Tibial artery (tissue), 4 donors: ENCODE measurements at regions of chr6 and their contacts with region 1.

Region 1: DNA sequence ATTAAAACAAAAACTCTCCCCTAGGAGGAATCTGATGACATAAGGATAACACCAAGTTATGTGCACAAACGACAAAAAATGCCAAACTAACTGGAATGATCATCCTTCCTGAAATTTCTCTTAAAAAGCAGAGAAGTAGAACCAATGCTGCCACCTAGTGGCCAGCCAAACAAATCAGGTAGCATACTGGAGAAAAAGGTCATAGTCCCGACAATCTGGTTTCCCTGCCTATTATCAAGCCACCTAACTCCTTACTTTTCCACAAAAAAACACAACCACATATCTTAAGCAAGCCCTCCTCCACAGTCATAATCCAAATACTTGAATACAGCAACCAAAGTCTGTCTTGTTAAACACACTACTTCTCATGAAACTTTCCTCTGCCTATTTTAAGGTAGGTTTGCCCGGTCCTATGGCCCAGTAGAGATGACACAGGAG is 5.3 kb downstream of the OARD1 start:
- DNase-seq: peak in 1 of 2 donors; percentile 79
- H3K4me3 ChIP-seq: no peak overlapping the region
- H3K27ac ChIP-seq: no peak overlapping the region
- H3K4me1 ChIP-seq: peaks cover 0 to 10% (median 8%) of the 10 kb centered on the region in 4 donors
- H3K27me3 ChIP-seq: no peaks in the 10 kb centered on the region
- CTCF ChIP-seq: peak; percentile 69

Region 2: DNA sequence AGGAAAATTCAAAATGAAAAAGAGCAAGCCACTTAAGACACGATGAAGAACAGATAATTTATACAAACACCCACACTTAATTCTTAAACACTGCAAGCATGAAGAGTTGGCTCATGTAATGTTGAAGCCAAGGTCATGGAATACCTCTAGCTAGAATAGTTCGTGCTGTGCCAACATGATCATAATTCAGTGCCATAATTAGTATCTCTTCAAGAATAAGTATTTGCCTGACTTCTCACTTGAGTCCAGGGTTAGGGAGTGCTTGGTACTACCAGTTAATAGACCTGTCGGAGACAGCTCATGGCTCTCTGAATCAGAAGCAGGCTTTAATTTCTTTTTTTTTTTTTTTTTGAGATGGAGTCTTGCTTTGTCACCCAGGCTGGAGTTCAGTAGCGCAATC is 234.2 kb before region 1 on chr6:
- intact Hi-C with region 1: no loop called
- DNase-seq: no peak
- H3K4me3 ChIP-seq: no peak overlapping the region
- H3K27ac ChIP-seq: no peak overlapping the region
- H3K4me1 ChIP-seq: no peaks in the 10 kb centered on the region
- H3K27me3 ChIP-seq: no peaks in the 10 kb centered on the region
- CTCF ChIP-seq: no peak

Region 3: DNA sequence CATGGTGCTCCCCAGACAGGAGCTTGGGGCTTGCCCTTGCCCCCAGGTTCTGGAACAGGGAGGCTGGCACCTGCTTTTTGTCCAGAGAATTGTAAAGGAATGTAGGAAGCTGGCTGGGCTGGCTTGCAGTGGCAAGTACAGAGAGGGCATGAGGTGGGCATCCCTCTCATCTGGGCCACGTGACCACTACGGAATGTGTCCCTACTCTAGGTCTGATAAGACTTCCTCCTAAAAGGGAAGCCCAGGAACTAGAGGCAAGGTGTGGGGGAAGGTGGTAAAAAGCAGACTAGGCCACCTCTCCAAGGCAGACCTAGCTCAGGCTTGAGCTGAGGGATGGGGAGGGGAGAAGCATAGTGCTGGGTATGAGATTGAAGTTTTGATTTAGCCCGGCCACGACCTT is 66.6 kb before region 1 on chr6:
- intact Hi-C with region 1: loop called (anchors 10 kb)
- DNase-seq: no peak
- H3K4me3 ChIP-seq: no peak overlapping the region
- H3K27ac ChIP-seq: no peak overlapping the region
- H3K4me1 ChIP-seq: no peaks in the 10 kb centered on the region
- H3K27me3 ChIP-seq: peaks cover 0 to 7% of the 10 kb centered on the region in 2 donors
- CTCF ChIP-seq: no peak

Region 4: DNA sequence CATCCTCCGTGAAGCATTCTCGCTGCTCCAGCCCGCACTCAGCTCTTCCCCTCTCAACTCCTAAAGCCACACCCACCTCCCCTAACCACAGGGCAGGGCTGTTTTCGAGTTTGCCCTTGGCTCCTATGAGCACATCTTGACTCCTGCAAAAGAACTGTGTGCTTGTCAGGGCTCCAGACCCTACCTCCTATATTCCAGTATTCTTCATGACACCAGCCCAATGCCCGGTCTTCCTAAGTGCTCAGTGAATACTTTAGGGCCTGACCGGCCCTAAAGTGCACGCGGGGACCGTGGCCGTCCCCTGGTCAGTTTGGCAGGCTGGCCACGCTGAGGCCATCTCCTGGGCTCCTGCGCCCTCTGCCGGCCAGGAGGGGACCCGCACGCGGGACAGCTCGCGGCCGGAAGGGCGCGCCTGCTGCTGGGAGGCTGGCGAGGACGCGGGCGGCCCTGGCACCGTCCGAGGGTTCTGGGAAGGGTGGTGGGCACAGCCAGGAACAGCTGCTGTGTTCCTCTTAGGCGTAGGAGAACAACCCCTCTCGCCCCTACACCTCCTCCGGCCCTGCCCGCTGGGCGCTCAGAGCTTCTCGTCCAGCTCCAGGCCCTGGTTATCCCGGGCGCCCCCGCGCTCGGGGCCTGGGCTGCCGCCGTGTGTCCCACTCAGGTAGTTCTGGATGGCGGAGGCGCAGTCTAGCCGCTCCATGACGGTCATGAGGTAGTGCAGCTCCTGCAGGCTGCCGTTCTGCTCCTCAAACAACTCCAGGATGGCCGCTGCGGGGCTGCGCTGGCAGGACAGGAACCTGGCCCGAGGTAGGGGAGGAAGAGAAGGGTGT is 38.9 kb before region 1 on chr6:
- intact Hi-C with region 1: loop called (anchors 5 kb)
- DNase-seq: peak; percentile 82 to 88
- H3K4me3 ChIP-seq: peak overlapping the region; percentile 49 to 59
- H3K27ac ChIP-seq: peak overlapping the region; percentile 61 to 65
- H3K4me1 ChIP-seq: peaks cover 0 to 16% (median 13%) of the 10 kb centered on the region in 4 donors
- H3K27me3 ChIP-seq: no peaks in the 10 kb centered on the region
- CTCF ChIP-seq: peak; percentile 98 to 99

Region 5: GRCh38 chr6:41122373-41122772 is 55.5 kb after region 1 on chr6:
- intact Hi-C with region 1: no loop called
- DNase-seq: no peak
- H3K4me3 ChIP-seq: no peak overlapping the region
- H3K27ac ChIP-seq: no peak overlapping the region
- H3K4me1 ChIP-seq: no peaks in the 10 kb centered on the region
- H3K27me3 ChIP-seq: no peaks in the 10 kb centered on the region
- CTCF ChIP-seq: no peak